Activated B cell treated with CpG ODN at 0.5 μM for 24 hours (primary cell): ENCODE measurements at regions of chr6 and their contacts with region 1.

Region 1: DNA sequence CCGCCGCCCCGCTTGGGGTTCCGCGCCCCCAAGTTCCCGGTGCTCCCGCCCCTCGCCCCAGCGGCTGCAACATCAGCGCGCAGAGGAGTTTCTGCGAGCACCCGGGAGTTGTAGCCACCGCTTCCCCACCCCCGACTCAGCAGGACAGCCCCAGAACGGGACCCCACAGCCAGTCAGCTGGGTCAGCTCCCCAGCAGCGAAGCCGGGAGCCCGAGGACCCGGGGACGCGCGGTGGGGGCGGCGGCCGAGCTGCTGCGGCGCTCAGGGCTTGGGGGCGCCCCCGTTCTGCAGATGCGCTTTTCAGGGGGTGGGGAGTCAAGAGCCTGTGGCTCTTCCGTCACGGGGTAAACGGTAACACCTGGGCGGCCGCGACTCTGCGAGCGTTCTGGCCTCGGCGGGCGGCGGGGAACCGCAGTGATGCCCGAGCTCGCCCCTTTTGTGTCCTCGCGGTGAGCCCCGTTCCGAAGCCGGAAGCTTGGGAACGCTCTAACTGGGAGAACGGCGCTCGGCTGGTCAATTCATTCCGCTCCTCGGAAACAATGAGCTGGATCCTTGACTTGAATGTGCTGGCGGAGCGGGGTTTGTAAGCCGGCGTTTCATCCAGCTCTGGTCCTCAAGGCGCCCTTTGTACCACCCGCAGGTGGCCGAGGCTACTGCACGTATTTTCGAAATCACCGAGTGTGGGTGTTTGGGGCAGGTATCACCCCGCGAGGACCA is 774 bp downstream of the PLEKHG1 start:
- DNase-seq: peak; percentile 82
- ATAC-seq: peak; percentile 70
- H3K4me3 Mint-ChIP-seq: peak overlapping the region; percentile 98
- H3K27ac Mint-ChIP-seq: peak overlapping the region; percentile 97
- H3K4me1 Mint-ChIP-seq: peaks cover 68% of the 10 kb centered on the region
- H3K27me3 Mint-ChIP-seq: no peaks in the 10 kb centered on the region
- CTCF ChIP-seq: no peak

Region 2: DNA sequence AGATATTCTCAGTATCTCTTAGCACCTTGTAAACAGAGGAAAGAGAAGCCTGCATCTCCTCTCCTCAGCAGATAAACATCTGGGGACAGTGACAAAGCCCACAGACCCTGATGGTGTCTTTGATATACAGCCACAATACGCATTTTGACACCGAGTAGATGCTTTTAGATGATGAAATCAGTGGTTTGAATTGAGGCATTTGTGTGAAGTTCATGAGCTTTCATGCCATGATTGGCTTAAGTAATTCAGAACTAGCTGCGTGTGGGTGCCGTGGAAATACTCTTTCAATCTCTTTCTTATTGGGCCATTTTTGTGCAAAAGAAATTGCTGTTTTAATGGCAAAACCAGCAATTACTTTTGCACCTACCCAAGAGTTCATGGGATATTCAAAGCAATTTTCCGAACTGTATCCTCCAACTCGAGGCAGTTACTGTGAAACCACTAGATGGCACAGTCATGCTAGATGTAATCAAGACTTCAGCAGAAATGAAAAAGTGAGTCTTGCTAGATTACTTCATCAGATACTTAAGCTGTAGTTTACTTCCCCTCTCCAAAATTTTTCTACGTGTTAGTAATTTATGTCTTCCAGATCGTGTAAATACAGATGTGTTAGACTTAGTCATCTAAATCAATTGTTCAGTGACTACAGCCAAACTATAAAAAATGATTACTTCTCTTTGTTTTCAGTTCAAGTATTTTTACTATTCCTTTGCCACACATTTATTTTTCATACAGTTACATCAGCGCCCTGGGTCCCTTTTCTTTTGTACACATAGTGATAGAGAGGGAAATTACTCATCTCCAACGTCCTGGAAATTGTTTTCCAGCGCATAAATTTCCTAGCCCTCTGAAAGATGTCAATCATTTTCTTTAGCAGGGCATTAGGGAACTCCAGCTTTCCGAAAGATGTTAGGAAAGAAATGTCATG is 182.3 kb before region 1 on chr6:
- CTCF ChIA-PET with region 1: interaction called, 55 read pairs
- POLR2A ChIA-PET with region 1: interaction called, 70 read pairs
- intact Hi-C with region 1: loop called (anchors 1 kb)
- DNase-seq: no peak
- ATAC-seq: peak; percentile 90
- H3K4me3 Mint-ChIP-seq: peak overlapping the region; percentile 82
- H3K27ac Mint-ChIP-seq: peak overlapping the region; percentile 77
- H3K4me1 Mint-ChIP-seq: peaks cover 14% of the 10 kb centered on the region
- H3K27me3 Mint-ChIP-seq: peaks cover 16% of the 10 kb centered on the region
- CTCF ChIP-seq: peak; percentile 58

Region 3: GRCh38 chr6:150470960-150471665 is 129.3 kb before region 1 on chr6:
- CTCF ChIA-PET with region 1: no interaction called
- POLR2A ChIA-PET with region 1: no interaction called
- intact Hi-C with region 1: no loop called
- DNase-seq: no peak
- ATAC-seq: no peak
- H3K4me3 Mint-ChIP-seq: no peak overlapping the region
- H3K27ac Mint-ChIP-seq: no peak overlapping the region
- H3K4me1 Mint-ChIP-seq: no peaks in the 10 kb centered on the region
- H3K27me3 Mint-ChIP-seq: peaks cover 5% of the 10 kb centered on the region
- CTCF ChIP-seq: no peak

Region 4: DNA sequence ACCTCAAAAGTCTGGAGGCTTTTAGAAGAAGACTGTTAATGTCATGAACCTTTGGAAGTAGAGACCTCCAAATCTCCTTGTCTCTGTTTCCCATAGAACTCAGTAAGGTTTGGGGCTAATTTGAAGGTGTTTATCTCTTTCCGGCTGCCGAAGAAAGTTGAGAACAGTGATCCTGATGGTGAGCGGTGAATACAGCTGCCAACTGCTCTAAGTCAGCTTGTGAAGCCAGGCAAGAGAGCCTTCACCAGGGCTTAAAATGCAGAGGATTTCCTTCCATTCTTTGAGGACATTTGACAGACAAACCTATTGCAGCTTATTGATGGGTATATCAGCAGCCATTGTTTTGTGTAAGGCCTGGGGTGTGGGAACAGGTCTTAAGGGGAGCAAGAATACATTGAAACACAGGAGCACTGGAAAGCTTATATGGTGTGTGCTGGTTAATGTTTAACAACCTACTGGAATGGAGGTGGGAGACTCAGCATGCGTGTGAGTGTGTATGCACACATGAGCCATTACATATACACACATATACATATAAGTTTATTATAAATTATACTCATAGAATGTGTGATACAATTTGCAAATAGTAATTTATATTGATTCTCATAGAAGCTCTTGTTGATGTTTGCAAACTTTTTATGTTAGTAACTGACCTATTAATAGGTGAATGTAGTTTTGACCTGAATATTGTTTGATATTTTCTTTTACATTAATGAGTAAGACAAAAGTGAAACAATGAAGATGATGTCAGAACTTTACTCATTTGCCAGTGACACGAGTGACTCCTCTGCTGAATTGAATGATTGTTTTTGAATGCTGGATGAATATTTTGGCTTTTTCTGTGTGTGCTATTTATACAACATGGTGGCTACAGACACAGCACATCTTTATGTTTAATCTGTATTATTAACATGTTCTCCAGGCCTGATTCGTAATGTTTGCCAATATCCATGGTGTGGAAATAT is 17.3 kb after region 1 on chr6:
- CTCF ChIA-PET with region 1: interaction called, 19 read pairs
- POLR2A ChIA-PET with region 1: interaction called, 177 read pairs
- intact Hi-C with region 1: loop called (anchors 1 kb)
- DNase-seq: no peak
- ATAC-seq: no peak
- H3K4me3 Mint-ChIP-seq: peak overlapping the region; percentile 22
- H3K27ac Mint-ChIP-seq: peak overlapping the region; percentile 65
- H3K4me1 Mint-ChIP-seq: peaks cover 95% of the 10 kb centered on the region
- H3K27me3 Mint-ChIP-seq: no peaks in the 10 kb centered on the region
- CTCF ChIP-seq: no peak

Region 5: DNA sequence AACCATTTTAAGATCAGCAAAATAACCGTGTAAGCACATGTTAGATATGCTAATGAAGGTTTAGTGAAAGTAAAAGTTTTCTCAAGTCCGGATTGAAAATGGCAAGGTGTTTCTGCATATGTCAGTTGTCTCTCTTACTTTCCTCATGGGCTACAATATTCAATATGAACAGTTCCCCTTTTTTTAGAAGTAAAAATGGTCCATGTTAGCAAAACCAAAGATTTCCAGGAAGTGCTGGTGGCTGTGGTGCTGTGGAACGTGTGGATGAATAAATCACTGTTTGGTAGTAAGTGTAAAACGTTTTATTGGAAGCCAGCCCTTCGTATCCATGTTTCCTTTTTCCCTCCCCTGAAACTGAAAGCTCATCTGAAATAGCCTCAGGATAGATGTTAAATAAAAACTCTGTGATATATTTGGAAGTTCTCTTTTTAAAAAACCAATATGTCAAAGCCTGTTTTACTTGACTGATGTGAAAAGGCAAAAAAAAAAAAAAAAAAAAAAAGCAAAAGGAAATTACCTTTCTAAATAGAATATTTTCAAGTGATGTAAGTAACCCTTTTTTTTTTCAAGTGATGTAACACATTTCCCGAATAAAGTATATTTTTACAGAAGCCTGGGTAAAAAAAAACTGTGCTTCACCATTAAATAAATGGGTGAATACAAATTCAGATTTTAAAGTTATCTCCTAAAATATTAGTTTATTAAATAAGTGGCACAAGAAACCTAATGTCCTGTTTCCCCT is 41.1 kb after region 1 on chr6:
- CTCF ChIA-PET with region 1: interaction called, 9 read pairs
- POLR2A ChIA-PET with region 1: interaction called, 537 read pairs
- intact Hi-C with region 1: no loop called
- DNase-seq: no peak
- ATAC-seq: peak; percentile 49
- H3K4me3 Mint-ChIP-seq: peak overlapping the region; percentile 77
- H3K27ac Mint-ChIP-seq: peak overlapping the region; percentile 91
- H3K4me1 Mint-ChIP-seq: peaks cover 90% of the 10 kb centered on the region
- H3K27me3 Mint-ChIP-seq: no peaks in the 10 kb centered on the region
- CTCF ChIP-seq: no peak

Region 6: DNA sequence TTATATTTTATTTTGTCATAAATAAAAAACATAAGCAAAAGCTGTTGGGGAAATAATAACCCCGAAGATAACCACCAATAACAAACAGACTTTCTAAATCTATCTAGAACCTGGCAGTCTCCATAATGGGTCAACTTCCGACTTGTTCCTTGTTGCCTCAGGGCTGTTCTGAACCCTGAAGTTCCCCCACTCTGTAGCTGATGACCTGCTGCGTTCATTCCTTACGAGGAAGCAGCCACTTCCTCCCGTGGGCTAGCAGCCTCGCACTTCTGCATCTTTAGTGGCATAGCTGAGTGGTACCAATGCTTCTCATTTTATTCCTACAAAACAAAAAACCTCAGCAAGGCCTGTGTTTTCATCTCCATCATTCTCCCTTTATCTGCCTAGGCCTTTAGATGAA is 102.2 kb after region 1 on chr6:
- CTCF ChIA-PET with region 1: interaction called, 3 read pairs
- POLR2A ChIA-PET with region 1: interaction called, 19 read pairs
- intact Hi-C with region 1: no loop called
- DNase-seq: no peak
- ATAC-seq: peak; percentile 74
- H3K4me3 Mint-ChIP-seq: peak overlapping the region; percentile 11
- H3K27ac Mint-ChIP-seq: peak overlapping the region; percentile 86
- H3K4me1 Mint-ChIP-seq: peaks cover 91% of the 10 kb centered on the region
- H3K27me3 Mint-ChIP-seq: no peaks in the 10 kb centered on the region
- CTCF ChIP-seq: no peak

Region 7: GRCh38 chr6:150741633-150742504 is 141.4 kb after region 1 on chr6:
- CTCF ChIA-PET with region 1: interaction called, 13 read pairs
- POLR2A ChIA-PET with region 1: interaction called, 15 read pairs
- intact Hi-C with region 1: loop called (anchors 1 kb)
- DNase-seq: no peak
- ATAC-seq: peak; percentile 72
- H3K4me3 Mint-ChIP-seq: no peak overlapping the region
- H3K27ac Mint-ChIP-seq: peak overlapping the region; percentile 57
- H3K4me1 Mint-ChIP-seq: peaks cover 66% of the 10 kb centered on the region
- H3K27me3 Mint-ChIP-seq: no peaks in the 10 kb centered on the region
- CTCF ChIP-seq: peak; percentile 52